Caco-2 (cell line): ENCODE measurements at regions of chr18 and their contacts with region 1.

Region 1: DNA sequence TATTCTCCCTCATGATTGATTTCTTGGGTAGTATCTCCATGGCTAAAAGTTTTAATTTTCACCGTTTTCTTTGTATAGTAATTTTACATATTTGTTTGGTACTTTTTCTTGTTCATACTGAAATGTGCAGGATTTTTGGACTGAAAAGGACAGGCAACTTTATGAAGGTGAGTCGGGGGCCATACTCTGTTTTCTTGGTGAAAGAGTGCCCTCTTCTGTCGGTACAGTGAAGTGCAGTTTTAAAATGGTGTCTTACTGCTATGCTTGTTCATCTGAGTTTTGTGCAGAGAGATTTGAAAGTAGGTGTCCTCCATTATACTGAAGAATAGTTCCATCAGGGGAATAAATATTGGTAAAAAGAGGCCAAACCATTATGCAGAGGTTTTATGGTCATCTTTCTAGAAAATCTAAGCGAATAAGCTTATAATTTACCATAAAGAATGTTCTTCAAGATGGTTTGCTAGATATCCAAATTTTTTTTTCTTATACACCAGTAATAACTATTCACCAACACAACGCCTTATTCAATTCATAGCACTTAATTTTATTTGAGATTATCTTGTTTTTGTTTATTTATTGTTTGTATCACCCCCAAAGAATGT is 8.7 kb upstream of the SERPINB13 start:
- DNase-seq: peak in 1 of 2 experiments; percentile 14
- H3K4me3 ChIP-seq: no peak overlapping the region
- H3K4me3 Mint-ChIP-seq: no peak overlapping the region
- H3K27ac Mint-ChIP-seq: no peak overlapping the region
- H3K4me1 ChIP-seq: no peaks in the 10 kb centered on the region
- H3K4me1 Mint-ChIP-seq: no peaks in the 10 kb centered on the region
- H3K27me3 ChIP-seq: no peaks in the 10 kb centered on the region
- H3K27me3 Mint-ChIP-seq: peaks cover 3% of the 10 kb centered on the region
- CTCF ChIP-seq: peak; percentile 34 to 48

Region 2: DNA sequence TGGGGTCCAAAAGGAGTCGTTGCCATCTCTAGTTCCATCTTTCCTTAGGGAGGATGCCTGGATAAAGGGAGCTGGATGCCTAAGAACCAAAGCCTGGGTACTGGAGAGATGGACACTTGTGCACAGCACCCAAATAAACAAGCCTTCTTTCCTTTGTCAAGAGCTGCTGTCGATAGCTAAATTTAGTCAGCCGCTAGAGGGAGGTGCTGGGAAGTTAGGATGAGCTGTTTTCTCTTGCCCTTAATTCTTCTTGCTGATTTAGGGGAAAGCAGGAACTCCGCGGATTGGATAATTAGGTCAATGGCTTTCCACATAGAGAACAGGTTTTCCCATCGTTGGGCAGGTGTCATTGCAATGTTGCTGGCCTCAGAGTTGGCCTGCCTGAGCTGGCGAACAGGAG is 67.2 kb before region 1 on chr18:
- CTCF ChIA-PET with region 1: interaction called, 7 read pairs
- POLR2A ChIA-PET with region 1: no interaction called
- intact Hi-C with region 1: loop called (anchors 2 kb)
- DNase-seq: peak; percentile 26 to 49
- H3K4me3 ChIP-seq: no peak overlapping the region
- H3K4me3 Mint-ChIP-seq: no peak overlapping the region
- H3K27ac Mint-ChIP-seq: no peak overlapping the region
- H3K4me1 ChIP-seq: no peaks in the 10 kb centered on the region
- H3K4me1 Mint-ChIP-seq: no peaks in the 10 kb centered on the region
- H3K27me3 ChIP-seq: no peaks in the 10 kb centered on the region
- H3K27me3 Mint-ChIP-seq: peaks cover 11% of the 10 kb centered on the region
- CTCF ChIP-seq: peak in 1 of 2 experiments; percentile 33

Region 3: GRCh38 chr18:63518178-63519012 is 60.1 kb before region 1 on chr18:
- CTCF ChIA-PET with region 1: interaction called, 7 read pairs
- POLR2A ChIA-PET with region 1: no interaction called
- intact Hi-C with region 1: loop called (anchors 1 kb)
- DNase-seq: peak; percentile 49 to 51
- H3K4me3 ChIP-seq: no peak overlapping the region
- H3K4me3 Mint-ChIP-seq: no peak overlapping the region
- H3K27ac Mint-ChIP-seq: no peak overlapping the region
- H3K4me1 ChIP-seq: no peaks in the 10 kb centered on the region
- H3K4me1 Mint-ChIP-seq: no peaks in the 10 kb centered on the region
- H3K27me3 ChIP-seq: no peaks in the 10 kb centered on the region
- H3K27me3 Mint-ChIP-seq: peaks cover 6% of the 10 kb centered on the region
- CTCF ChIP-seq: peak; percentile 22 to 40

Region 4: DNA sequence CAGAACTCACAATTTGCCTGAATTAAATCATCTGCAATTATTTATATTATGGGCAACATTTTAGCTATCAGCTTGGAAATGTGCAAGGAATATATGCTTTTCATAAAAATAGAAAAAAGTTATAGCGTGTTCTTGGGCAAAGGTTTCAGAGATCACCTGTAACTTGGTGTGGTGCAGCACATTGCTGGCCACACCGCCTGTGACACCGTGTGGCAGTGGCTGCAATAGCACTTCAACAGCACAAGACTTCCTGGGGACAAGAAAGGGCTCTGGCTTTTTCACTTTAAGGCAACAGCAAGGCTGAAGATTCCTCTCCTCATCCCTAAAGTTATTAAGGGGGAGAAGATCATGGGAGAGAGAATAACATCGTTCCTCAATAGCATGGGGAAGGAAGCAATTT is 98.1 kb after region 1 on chr18:
- CTCF ChIA-PET with region 1: no interaction called
- POLR2A ChIA-PET with region 1: no interaction called
- intact Hi-C with region 1: loop called (anchors 5 kb)
- DNase-seq: peak; percentile 16 to 29
- H3K4me3 ChIP-seq: no peak overlapping the region
- H3K4me3 Mint-ChIP-seq: no peak overlapping the region
- H3K27ac Mint-ChIP-seq: no peak overlapping the region
- H3K4me1 ChIP-seq: no peaks in the 10 kb centered on the region
- H3K4me1 Mint-ChIP-seq: no peaks in the 10 kb centered on the region
- H3K27me3 ChIP-seq: no peaks in the 10 kb centered on the region
- H3K27me3 Mint-ChIP-seq: peaks cover 4% of the 10 kb centered on the region
- CTCF ChIP-seq: peak; percentile 28 to 44